ENCODE measurements at regions of chr10 and their contacts with region 1.

Region 1: GRCh38 chr10:87675396-87676376 is 16.0 kb downstream of the PAPSS2 start:
- H3K4me3 ChIP-seq: no peak overlapping the region
- H3K27ac ChIP-seq: no peak overlapping the region
- H3K4me1 ChIP-seq: peaks cover 15% of the 10 kb centered on the region
- CTCF ChIP-seq: no peak

Region 2: DNA sequence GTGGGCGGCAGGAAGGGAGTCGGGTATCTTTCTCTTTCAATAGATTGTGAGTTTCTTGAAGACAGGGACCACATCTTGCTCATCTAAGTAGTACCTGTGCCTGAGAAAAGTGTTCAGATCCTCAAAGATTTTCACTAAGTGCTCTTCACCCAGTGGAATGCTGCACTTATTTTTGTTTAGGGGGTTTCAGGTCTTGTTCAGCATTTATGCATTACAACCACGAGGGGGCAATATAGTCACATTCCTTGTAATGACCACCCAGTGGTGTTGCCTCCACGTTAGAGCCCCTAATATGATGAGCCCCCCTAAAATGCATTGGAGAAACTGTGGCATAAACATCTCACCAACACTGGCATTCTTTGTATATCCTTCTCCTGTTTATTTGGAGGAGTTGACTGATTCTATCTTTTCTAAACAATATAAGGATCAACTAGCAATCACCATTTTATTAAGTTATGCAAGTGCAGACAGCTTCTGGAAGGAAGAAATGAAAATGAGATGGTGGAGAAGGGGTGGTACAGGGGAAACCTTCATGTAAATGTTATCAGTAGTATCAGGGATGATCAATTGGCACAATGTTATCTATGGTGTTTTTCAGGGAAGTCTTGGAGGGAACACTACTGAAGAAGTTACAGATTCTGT is 19.1 kb before region 1 on chr10:
- CTCF ChIA-PET with region 1: no interaction called
- POLR2A ChIA-PET with region 1: no interaction called
- H3K4me3 ChIP-seq: no peak overlapping the region
- H3K27ac ChIP-seq: no peak overlapping the region
- H3K4me1 ChIP-seq: peaks cover 17% of the 10 kb centered on the region
- CTCF ChIP-seq: peak; percentile 69; the same call in 1 of the 2 replicates

Region 3: GRCh38 chr10:88095223-88095721 is 419.6 kb after region 1 on chr10:
- CTCF ChIA-PET with region 1: no interaction called
- POLR2A ChIA-PET with region 1: interaction called, 10 read pairs
- H3K4me3 ChIP-seq: no peak overlapping the region
- H3K27ac ChIP-seq: no peak overlapping the region
- H3K4me1 ChIP-seq: peaks cover 7% of the 10 kb centered on the region; the same call in 1 of the 2 replicates
- CTCF ChIP-seq: no peak

Measured in HEK293 (cell line).